ENCODE measurements at regions of chr3 and their contacts with region 1.

Region 1: GRCh38 chr3:36957862-36958686 is 13.2 kb upstream of the TRANK1 start:
- DNase-seq: no peak
- H3K4me3 Mint-ChIP-seq: peak overlapping the region; percentile 6
- H3K27ac Mint-ChIP-seq: peak overlapping the region; percentile 58
- H3K4me1 Mint-ChIP-seq: peaks cover 7% of the 10 kb centered on the region
- H3K27me3 Mint-ChIP-seq: peaks cover 4% of the 10 kb centered on the region

Region 2: DNA sequence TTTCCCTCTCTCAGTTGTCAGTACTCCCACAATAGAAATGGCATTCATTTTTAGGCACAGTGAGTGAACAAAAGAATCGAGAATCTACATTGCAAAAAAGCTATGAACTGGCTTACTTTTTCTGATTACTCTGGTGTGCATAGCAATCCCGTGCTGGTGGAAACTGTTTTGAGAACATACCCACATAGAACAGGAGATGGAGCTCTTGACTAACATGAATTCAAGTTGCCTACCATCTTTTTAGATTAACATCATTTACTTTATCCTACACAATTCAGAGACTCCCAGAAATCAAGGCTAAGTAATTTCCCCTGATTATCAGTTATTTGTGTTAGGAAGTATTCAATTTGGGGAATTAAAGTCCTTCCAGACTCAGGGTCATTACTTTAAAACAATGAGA is 992.2 kb before region 1 on chr3:
- intact Hi-C with region 1: loop called (anchors 5 kb)
- DNase-seq: no peak
- H3K4me3 Mint-ChIP-seq: no peak overlapping the region
- H3K27ac Mint-ChIP-seq: no peak overlapping the region
- H3K4me1 Mint-ChIP-seq: peaks cover 1% of the 10 kb centered on the region
- H3K27me3 Mint-ChIP-seq: no peaks in the 10 kb centered on the region

Region 3: DNA sequence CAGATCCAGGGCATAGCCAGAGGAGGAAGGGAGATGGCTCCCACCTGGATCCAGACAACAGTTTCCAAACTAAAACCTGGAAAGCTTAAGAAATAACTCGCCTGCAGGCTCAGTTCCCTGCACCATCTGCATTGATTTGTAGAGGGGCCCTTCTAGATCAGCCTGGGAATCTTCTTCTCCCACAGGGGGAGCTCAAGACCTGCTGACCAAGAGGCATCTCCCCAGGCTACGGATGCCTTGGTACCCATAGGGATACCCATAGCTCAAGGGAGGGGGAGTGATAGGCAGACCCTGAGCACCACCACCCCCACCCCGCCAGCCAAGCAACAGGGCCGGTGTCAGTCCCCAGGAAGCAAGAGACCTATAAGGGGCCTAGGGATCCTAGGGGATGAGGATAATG is 165.7 kb before region 1 on chr3:
- intact Hi-C with region 1: loop called (anchors 2 kb)
- DNase-seq: peak; percentile 69
- H3K4me3 Mint-ChIP-seq: no peak overlapping the region
- H3K27ac Mint-ChIP-seq: no peak overlapping the region
- H3K4me1 Mint-ChIP-seq: no peaks in the 10 kb centered on the region
- H3K27me3 Mint-ChIP-seq: peaks cover 19% of the 10 kb centered on the region

Region 4: GRCh38 chr3:36868614-36869436 is 89.2 kb before region 1 on chr3:
- intact Hi-C with region 1: loop called (anchors 2 kb)
- DNase-seq: peak; percentile 83
- H3K4me3 Mint-ChIP-seq: no peak overlapping the region
- H3K27ac Mint-ChIP-seq: no peak overlapping the region
- H3K4me1 Mint-ChIP-seq: peaks cover 10% of the 10 kb centered on the region
- H3K27me3 Mint-ChIP-seq: no peaks in the 10 kb centered on the region

Region 5: DNA sequence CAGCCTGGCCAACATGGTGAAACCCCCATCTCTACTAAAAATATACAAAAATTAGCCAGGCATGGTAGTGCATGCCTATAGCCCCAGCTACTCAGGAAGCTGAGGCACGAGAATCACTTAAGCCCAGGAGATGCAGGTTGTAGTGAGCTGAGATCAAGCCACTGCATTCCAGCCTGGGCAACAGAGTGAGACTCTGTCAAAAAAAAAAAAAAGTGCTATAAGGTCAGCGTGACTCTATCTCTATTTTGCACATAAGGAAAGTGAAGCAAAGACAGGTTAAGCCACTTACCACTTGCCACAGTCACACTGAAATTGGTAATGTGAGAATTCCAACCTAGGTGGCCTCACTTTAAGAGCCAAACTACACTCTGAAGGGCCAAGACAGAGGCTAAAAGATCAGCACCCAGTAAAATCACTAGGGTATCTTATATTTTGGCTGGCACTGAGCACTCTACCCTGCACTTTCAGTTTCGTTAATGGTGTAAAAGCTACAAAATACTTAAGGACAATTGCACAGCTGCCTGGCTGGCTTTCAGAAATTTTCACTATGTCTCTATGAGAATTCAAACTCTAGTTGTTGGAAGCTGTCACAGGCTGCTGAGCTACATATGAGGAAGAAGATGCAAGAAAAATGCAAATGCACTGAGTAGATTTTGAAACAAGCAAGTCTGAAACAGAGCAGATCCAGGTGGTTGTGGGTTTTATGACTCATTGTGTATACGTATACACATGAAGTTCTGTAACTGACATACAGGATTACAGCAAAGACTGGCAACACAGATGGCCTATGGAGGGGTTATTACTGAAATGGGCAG is 45.9 kb before region 1 on chr3:
- intact Hi-C with region 1: loop called (anchors 2 kb)
- DNase-seq: peak; percentile 85
- H3K4me3 Mint-ChIP-seq: peak overlapping the region; percentile 66
- H3K27ac Mint-ChIP-seq: peak overlapping the region; percentile 71
- H3K4me1 Mint-ChIP-seq: peaks cover 38% of the 10 kb centered on the region
- H3K27me3 Mint-ChIP-seq: no peaks in the 10 kb centered on the region

Region 6: DNA sequence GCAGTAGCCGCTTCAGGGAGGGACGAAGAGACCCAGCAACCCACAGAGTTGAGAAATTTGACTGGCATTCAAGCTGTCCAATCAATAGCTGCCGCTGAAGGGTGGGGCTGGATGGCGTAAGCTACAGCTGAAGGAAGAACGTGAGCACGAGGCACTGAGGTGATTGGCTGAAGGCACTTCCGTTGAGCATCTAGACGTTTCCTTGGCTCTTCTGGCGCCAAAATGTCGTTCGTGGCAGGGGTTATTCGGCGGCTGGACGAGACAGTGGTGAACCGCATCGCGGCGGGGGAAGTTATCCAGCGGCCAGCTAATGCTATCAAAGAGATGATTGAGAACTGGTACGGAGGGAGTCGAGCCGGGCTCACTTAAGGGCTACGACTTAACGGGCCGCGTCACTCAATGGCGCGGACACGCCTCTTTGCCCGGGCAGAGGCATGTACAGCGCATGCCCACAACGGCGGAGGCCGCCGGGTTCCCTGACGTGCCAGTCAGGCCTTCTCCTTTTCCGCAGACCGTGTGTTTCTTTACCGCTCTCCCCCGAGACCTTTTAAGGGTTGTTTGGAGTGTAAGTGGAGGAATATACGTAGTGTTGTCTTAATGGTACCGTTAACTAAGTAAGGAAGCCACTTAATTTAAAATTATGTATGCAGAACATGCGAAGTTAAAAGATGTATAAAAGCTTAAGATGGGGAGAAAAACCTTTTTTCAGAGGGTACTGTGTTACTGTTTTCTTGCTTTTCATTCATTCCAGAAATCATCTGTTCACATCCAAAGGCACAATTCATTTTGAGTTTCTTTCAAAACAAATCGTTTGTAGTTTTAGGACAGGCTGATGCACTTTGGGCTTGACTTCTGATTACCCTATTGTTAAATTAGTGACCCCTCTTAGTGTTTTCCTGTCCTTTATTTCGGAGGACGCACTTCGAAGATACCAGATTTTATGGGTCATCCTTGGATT is 35.5 kb after region 1 on chr3 and contains the start of gene MLH1:
- intact Hi-C with region 1: loop called (anchors 1 kb)
- DNase-seq: peak; percentile 100
- H3K4me3 Mint-ChIP-seq: no peak within 1 kb of the TSS
- H3K27ac Mint-ChIP-seq: no peak within 1 kb of the TSS
- H3K4me1 Mint-ChIP-seq: peaks cover 38% of the 10 kb centered on the region
- H3K27me3 Mint-ChIP-seq: no peaks in the 10 kb centered on the region
- total RNA-seq, gene MLH1: 69.5 and 71.0 TPM in 2 replicates